ENCODE measurements at regions of chr12 and their contacts with region 1.

Region 1: GRCh38 chr12:75489613-75490210 is 9.2 kb downstream of the GLIPR1 start:
- DNase-seq: no peak
- H3K4me3 ChIP-seq: no peak overlapping the region
- H3K4me3 Mint-ChIP-seq: no peak overlapping the region
- H3K27ac Mint-ChIP-seq: no peak overlapping the region
- H3K4me1 ChIP-seq: no peaks in the 10 kb centered on the region
- H3K4me1 Mint-ChIP-seq: no peaks in the 10 kb centered on the region
- H3K27me3 ChIP-seq: no peaks in the 10 kb centered on the region
- H3K27me3 Mint-ChIP-seq: no peaks in the 10 kb centered on the region
- CTCF ChIP-seq: no peak

Region 2: GRCh38 chr12:74689071-74689655 is 800.5 kb before region 1 on chr12:
- CTCF ChIA-PET with region 1: no interaction called
- POLR2A ChIA-PET with region 1: no interaction called
- intact Hi-C with region 1: loop called (anchors 5 kb)
- DNase-seq: no peak
- H3K4me3 ChIP-seq: no peak overlapping the region
- H3K4me3 Mint-ChIP-seq: no peak overlapping the region
- H3K27ac Mint-ChIP-seq: no peak overlapping the region
- H3K4me1 ChIP-seq: no peaks in the 10 kb centered on the region
- H3K4me1 Mint-ChIP-seq: no peaks in the 10 kb centered on the region
- H3K27me3 ChIP-seq: no peaks in the 10 kb centered on the region
- H3K27me3 Mint-ChIP-seq: peaks cover 6% of the 10 kb centered on the region
- CTCF ChIP-seq: peak; percentile 41

Region 3: DNA sequence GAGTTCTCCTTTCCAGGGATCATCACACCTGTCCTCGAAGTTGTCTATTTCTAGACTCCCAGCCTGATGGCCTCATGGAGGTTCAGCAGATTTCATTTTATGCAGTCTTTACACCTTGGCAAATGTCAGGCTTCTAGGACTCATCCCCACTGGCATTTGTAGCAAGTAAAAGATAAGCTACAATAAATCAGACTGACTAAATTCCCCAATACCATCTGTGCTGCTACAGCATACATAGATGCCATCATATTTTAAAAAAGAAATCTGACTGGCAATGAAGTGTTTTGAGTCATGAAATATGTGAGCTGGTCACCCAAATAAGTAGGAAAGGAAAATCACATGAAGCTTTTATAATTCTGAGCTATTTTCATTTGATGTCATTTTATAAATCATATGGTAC is 335.3 kb before region 1 on chr12:
- CTCF ChIA-PET with region 1: no interaction called
- POLR2A ChIA-PET with region 1: no interaction called
- intact Hi-C with region 1: loop called (anchors 2 kb)
- DNase-seq: no peak
- H3K4me3 ChIP-seq: no peak overlapping the region
- H3K4me3 Mint-ChIP-seq: no peak overlapping the region
- H3K27ac Mint-ChIP-seq: no peak overlapping the region
- H3K4me1 ChIP-seq: no peaks in the 10 kb centered on the region
- H3K4me1 Mint-ChIP-seq: no peaks in the 10 kb centered on the region
- H3K27me3 ChIP-seq: no peaks in the 10 kb centered on the region
- H3K27me3 Mint-ChIP-seq: no peaks in the 10 kb centered on the region
- CTCF ChIP-seq: no peak

Region 4: DNA sequence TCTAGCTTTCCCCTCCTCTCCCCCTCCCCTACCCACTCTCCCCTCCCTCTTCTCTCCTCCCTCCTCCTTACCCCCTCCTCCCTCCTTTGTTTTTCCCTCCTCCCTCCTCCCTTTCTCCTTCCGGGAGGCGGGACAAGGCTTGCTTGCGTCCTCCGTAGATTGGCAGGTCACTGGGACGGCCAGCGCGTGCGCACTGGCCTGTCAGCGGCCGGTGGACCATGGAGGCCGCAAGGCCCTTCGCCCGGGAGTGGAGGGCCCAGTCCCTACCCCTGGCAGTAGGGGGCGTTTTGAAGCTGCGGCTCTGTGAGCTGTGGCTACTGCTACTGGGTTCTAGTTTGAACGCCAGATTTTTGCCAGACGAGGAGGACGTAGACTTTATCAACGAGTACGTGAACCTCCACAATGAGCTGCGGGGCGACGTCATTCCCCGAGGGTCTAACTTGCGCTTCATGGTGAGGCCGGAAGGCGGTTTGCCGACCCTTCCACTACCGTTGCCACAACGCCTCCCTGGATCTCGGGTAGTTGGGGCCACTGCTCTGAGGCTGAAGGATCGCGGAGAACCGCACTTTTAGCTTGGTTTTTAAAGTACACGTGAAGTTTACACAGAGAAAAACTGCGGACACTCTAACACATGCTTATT is 98.7 kb before region 1 on chr12 and contains the start of gene GLIPR1L2:
- CTCF ChIA-PET with region 1: no interaction called
- POLR2A ChIA-PET with region 1: no interaction called
- intact Hi-C with region 1: loop called (anchors 5 kb)
- DNase-seq: peak; percentile 89 to 90
- H3K4me3 ChIP-seq: peak within 1 kb of the TSS; percentile 52
- H3K4me3 Mint-ChIP-seq: peak within 1 kb of the TSS; percentile 77
- H3K27ac Mint-ChIP-seq: peak within 1 kb of the TSS; percentile 35
- H3K4me1 ChIP-seq: no peaks in the 10 kb centered on the region
- H3K4me1 Mint-ChIP-seq: no peaks in the 10 kb centered on the region
- H3K27me3 ChIP-seq: no peaks in the 10 kb centered on the region
- H3K27me3 Mint-ChIP-seq: peaks cover 8% of the 10 kb centered on the region
- CTCF ChIP-seq: peak; percentile 72 to 77
- total RNA-seq, gene GLIPR1L2: not detected in 2 replicates

Measured in Caco-2 (cell line).